A673 (cell line): ENCODE measurements at regions of chr3 and their contacts with region 1.

Region 1: GRCh38 chr3:11643605-11644087 is at the start of gene VGLL4:
- DNase-seq: peak; percentile 97
- H3K4me3 ChIP-seq: peak within 1 kb of the TSS; percentile 78
- H3K27ac ChIP-seq: peak within 1 kb of the TSS; percentile 96
- H3K4me1 ChIP-seq: peaks cover 27% of the 10 kb centered on the region
- H3K27me3 ChIP-seq: no peaks in the 10 kb centered on the region
- CTCF ChIP-seq: peak; percentile 36; the same call in 1 of the 2 replicates
- total RNA-seq, gene VGLL4: 41.2 and 41.4 TPM in 2 replicates

Region 2: GRCh38 chr3:11514191-11514821 is 129.3 kb before region 1 on chr3:
- CTCF ChIA-PET with region 1: no interaction called
- POLR2A ChIA-PET with region 1: no interaction called
- intact Hi-C with region 1: loop called (anchors 10 kb)
- DNase-seq: peak; percentile 85
- H3K4me3 ChIP-seq: no peak overlapping the region
- H3K27ac ChIP-seq: peak overlapping the region; percentile 38
- H3K4me1 ChIP-seq: peaks cover 29% of the 10 kb centered on the region
- H3K27me3 ChIP-seq: no peaks in the 10 kb centered on the region
- CTCF ChIP-seq: no peak

Region 3: GRCh38 chr3:11582191-11582968 is 61.3 kb before region 1 on chr3:
- CTCF ChIA-PET with region 1: no interaction called
- POLR2A ChIA-PET with region 1: no interaction called
- intact Hi-C with region 1: loop called (anchors 2 kb)
- DNase-seq: peak; percentile 90
- H3K4me3 ChIP-seq: peak overlapping the region; percentile 42
- H3K27ac ChIP-seq: peak overlapping the region; percentile 77
- H3K4me1 ChIP-seq: peaks cover 61% of the 10 kb centered on the region
- H3K27me3 ChIP-seq: no peaks in the 10 kb centered on the region
- CTCF ChIP-seq: no peak

Region 4: DNA sequence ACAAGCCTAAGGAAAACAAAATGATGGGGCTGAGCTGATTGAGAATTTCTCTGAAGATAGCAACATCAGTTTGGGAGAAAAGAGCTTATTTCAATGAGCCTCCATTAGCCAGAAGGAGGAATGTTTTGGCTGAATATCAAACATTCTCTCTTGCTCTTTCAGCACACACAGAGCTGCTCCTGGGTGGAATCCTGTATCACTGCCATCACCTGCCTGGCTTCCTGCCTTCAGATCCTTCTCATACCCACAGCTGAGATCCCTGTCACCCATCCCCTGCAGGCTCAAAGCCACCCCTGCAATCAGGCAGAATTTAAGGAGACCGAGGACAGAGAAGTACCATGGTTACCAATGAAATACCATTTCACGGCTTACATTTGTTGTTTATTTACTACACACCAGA is 333.3 kb after region 1 on chr3:
- CTCF ChIA-PET with region 1: no interaction called
- POLR2A ChIA-PET with region 1: no interaction called
- intact Hi-C with region 1: no loop called
- DNase-seq: no peak
- H3K4me3 ChIP-seq: no peak overlapping the region
- H3K27ac ChIP-seq: no peak overlapping the region
- H3K4me1 ChIP-seq: no peaks in the 10 kb centered on the region
- H3K27me3 ChIP-seq: peaks cover 92% of the 10 kb centered on the region
- CTCF ChIP-seq: no peak